ENCODE measurements at regions of chr6 and their contacts with region 1.

Region 1: GRCh38 chr6:3848925-3849605 is at the start of gene FAM50B:
- DNase-seq: peak; percentile 58 to 85
- ATAC-seq: peak; percentile 98 to 99
- H3K4me3 ChIP-seq: peak within 1 kb of the TSS; percentile 38
- H3K27ac ChIP-seq: peak within 1 kb of the TSS; percentile 81 to 91
- H3K4me1 ChIP-seq: peaks cover under 1% of the 10 kb centered on the region; the same call in 2 of the 3 replicates
- CTCF ChIP-seq: peak; percentile 83
- EP300 ChIP-seq: no peak
- POLR2A ChIP-seq: no peak
- RAD21 ChIP-seq: peak; percentile 80 to 95
- polyA plus RNA-seq, gene FAM50B: 4.6 and 5.1 TPM in 2 replicates

Region 2: GRCh38 chr6:3755637-3756545 is 93.2 kb before region 1 on chr6:
- CTCF ChIA-PET with region 1: interaction called, 20 read pairs
- POLR2A ChIA-PET with region 1: no interaction called
- DNase-seq: no peak
- ATAC-seq: no peak
- H3K4me3 ChIP-seq: no peak overlapping the region
- H3K27ac ChIP-seq: no peak overlapping the region
- H3K4me1 ChIP-seq: peaks cover 17% of the 10 kb centered on the region
- CTCF ChIP-seq: no peak
- EP300 ChIP-seq: no peak
- POLR2A ChIP-seq: no peak
- RAD21 ChIP-seq: no peak

Region 3: GRCh38 chr6:3831761-3832530 is 17.1 kb before region 1 on chr6:
- CTCF ChIA-PET with region 1: interaction called, 28 read pairs
- POLR2A ChIA-PET with region 1: no interaction called
- DNase-seq: no peak
- ATAC-seq: no peak
- H3K4me3 ChIP-seq: no peak overlapping the region
- H3K27ac ChIP-seq: no peak overlapping the region
- H3K4me1 ChIP-seq: peaks cover 12% of the 10 kb centered on the region; the same call in 2 of the 3 replicates
- CTCF ChIP-seq: no peak
- EP300 ChIP-seq: no peak
- POLR2A ChIP-seq: no peak
- RAD21 ChIP-seq: no peak

Region 4: DNA sequence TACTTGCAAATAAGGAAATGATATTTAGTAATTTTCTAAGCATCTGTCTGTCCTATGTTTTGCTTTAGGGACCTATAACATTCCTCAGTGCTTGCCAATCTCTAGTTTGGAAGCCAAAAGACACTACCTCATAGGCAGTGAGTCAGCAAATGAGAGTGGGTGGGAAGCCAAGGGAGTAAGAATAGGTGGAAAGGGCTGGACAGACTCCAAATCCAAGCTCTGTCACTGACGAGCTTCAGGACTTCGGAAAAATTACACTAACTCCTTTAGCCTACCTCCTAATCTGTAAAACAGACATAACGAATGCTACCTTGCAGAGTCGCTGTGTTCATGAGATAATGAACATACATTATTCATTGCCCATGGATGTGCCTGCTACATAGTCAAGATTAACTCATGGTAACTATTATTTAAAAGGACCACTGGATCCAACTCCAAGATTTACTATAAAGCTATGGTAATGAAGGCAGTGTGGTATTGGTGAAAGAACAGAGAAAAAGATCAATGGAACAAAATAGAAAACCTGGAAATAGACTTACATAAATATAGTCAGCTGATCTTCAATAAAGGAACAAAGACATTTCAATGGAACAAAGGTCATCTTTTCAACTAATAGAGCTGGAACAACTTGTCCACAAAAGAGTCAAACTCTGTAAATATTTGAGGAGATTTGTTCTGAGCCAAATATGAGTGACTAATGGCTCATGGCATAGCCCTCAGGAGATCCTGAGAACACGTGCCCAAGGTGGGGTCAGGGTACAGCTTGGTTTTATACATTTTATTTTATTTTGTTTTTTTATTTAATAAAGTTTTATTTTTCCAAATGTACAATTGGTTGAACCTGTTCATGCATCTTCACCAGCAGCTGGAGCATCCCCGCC is 64.3 kb after region 1 on chr6:
- CTCF ChIA-PET with region 1: interaction called, 51 read pairs
- POLR2A ChIA-PET with region 1: interaction called, 5 read pairs
- DNase-seq: peak; percentile 79 to 92
- ATAC-seq: peak; percentile 88 to 91
- H3K4me3 ChIP-seq: peak overlapping the region; percentile 29; the same call in 1 of the 3 replicates
- H3K27ac ChIP-seq: peak overlapping the region; percentile 83 to 89
- H3K4me1 ChIP-seq: peaks cover 34% of the 10 kb centered on the region
- CTCF ChIP-seq: no peak
- EP300 ChIP-seq: peak; percentile 37 to 68; a peak in 2 of 5 replicates
- POLR2A ChIP-seq: no peak
- RAD21 ChIP-seq: no peak

Region 5: DNA sequence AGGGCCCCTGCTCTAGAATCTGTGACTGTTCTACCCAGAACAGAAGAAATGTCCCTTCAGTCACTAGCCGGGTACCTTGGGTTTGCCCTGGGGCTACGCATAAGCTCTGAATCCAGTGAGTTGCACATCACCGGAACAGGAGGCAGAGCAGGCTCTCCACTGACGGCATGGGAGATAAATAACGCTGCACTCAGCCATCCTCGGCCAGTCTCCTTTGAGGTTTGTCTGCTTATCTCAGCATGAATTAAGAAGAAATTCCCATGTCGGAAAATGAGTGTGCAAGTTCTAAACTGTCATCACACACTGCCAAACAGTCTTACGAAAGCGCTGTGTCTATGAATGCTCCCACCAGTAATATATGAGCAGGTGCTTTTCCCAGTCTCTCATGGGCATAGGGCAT is 90.9 kb after region 1 on chr6:
- CTCF ChIA-PET with region 1: interaction called, 36 read pairs
- POLR2A ChIA-PET with region 1: no interaction called
- DNase-seq: no peak
- ATAC-seq: no peak
- H3K4me3 ChIP-seq: no peak overlapping the region
- H3K27ac ChIP-seq: no peak overlapping the region
- H3K4me1 ChIP-seq: peaks cover 1% of the 10 kb centered on the region
- CTCF ChIP-seq: no peak
- EP300 ChIP-seq: no peak
- POLR2A ChIP-seq: no peak
- RAD21 ChIP-seq: no peak

Region 6: GRCh38 chr6:3997177-3997770 is 148.2 kb after region 1 on chr6:
- CTCF ChIA-PET with region 1: interaction called, 10 read pairs
- POLR2A ChIA-PET with region 1: no interaction called
- DNase-seq: no peak
- ATAC-seq: no peak
- H3K4me3 ChIP-seq: no peak overlapping the region
- H3K27ac ChIP-seq: no peak overlapping the region
- H3K4me1 ChIP-seq: no peaks in the 10 kb centered on the region
- CTCF ChIP-seq: no peak
- EP300 ChIP-seq: no peak
- POLR2A ChIP-seq: no peak
- RAD21 ChIP-seq: no peak